Right cardiac atrium (tissue), 5 donors: ENCODE measurements at regions of chr4 and their contacts with region 1.

Region 1: GRCh38 chr4:120939693-120940092 is 17.2 kb upstream of the PRDM5 start:
- DNase-seq: no peak
- ATAC-seq: no peak
- H3K4me3 ChIP-seq: no peak overlapping the region
- H3K27ac ChIP-seq: no peak overlapping the region
- H3K4me1 ChIP-seq: no peaks in the 10 kb centered on the region
- H3K27me3 ChIP-seq: no peaks in the 10 kb centered on the region

Region 2: GRCh38 chr4:120452001-120452400 is 487.7 kb before region 1 on chr4:
- intact Hi-C with region 1: loop called in 1 of 4 experiments (anchors 5 kb)
- DNase-seq: no peak
- ATAC-seq: no peak
- H3K4me3 ChIP-seq: no peak overlapping the region
- H3K27ac ChIP-seq: no peak overlapping the region
- H3K4me1 ChIP-seq: no peaks in the 10 kb centered on the region
- H3K27me3 ChIP-seq: no peaks in the 10 kb centered on the region

Region 3: GRCh38 chr4:120683897-120684540 is 255.7 kb before region 1 on chr4:
- intact Hi-C with region 1: no loop called
- DNase-seq: no peak
- ATAC-seq: no peak
- H3K4me3 ChIP-seq: no peak overlapping the region
- H3K27ac ChIP-seq: no peak overlapping the region
- H3K4me1 ChIP-seq: no peaks in the 10 kb centered on the region
- H3K27me3 ChIP-seq: no peaks in the 10 kb centered on the region

Region 4: DNA sequence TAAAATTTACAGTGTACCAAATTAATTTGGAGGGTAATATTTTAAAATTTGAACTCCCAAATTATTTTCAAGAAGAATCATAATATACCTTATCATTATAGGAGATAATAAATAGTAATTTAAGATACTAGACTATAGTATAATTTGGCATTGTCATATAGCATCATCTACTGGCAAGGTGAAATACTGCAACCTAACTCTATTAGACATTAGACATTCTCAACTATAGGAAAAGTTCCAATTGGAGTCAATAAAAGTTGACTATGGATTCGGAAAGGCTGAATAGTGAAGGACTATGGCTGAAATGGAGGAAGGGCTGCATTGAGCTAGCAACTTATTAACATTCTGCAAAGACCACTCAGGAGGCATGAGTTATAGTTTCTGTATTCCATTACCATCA is 130.2 kb before region 1 on chr4:
- intact Hi-C with region 1: no loop called
- DNase-seq: no peak
- ATAC-seq: no peak
- H3K4me3 ChIP-seq: no peak overlapping the region
- H3K27ac ChIP-seq: no peak overlapping the region
- H3K4me1 ChIP-seq: no peaks in the 10 kb centered on the region
- H3K27me3 ChIP-seq: no peaks in the 10 kb centered on the region